ENCODE measurements at regions of chr16 and their contacts with region 1.

Region 1: GRCh38 chr16:66717112-66717675 is 20.7 kb upstream of the CMTM4 start:
- DNase-seq: peak in 2 of 3 donors; percentile 31 to 32
- H3K4me3 ChIP-seq: no peak overlapping the region
- H3K4me3 Mint-ChIP-seq: no peak overlapping the region
- H3K27ac ChIP-seq: no peak overlapping the region
- H3K27ac Mint-ChIP-seq: peak overlapping the region in 1 of 7 donors; percentile 42
- H3K4me1 ChIP-seq: no peaks in the 10 kb centered on the region
- H3K4me1 Mint-ChIP-seq: peaks cover 4% of the 10 kb centered on the region
- H3K27me3 ChIP-seq: no peaks in the 10 kb centered on the region
- H3K27me3 Mint-ChIP-seq: peaks cover 0 to 5% (median 0%) of the 10 kb centered on the region in 3 donors
- CTCF ChIP-seq: peak; percentile 72

Region 2: DNA sequence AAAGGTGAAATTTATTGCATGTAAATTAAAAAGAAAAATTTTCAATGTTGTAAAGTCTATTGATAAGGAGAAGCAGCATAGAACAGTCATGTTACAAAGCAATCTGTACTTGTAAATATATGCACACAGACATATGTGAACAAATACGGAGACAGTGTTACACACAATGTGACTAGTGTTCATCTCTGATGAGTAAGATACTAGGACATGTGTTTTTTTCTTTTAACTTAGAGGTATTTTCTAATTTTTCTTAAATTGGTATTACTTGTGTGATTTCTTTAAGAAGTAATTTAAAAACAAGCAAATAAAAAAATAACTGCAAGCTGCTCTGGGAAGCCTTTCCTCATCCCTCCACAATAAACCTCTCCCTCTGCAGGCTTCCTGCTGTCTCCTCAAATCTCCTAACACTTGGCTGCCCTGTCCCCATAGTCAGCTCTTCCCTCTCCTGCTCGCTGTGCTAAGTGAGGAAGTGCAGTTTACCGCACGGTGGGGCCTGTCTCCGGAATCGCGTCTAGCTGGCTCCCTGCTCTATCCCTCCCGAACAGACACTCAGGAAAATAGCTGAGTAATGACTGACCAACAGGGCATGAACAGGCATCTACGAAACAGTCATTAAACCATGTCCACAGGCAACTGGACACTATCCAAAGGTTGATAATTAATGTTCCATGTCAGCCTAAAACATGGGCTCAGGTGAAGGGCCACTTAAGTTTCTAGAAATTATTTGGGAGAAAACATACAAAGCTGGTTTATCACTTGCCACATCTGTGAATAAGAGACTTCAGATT is 56.6 kb before region 1 on chr16:
- intact Hi-C with region 1: loop called in 1 of 2 experiments (anchors 10 kb)
- DNase-seq: peak; percentile 44 to 62 (median 59)
- H3K4me3 ChIP-seq: peak overlapping the region in 1 of 3 experiments; percentile 24
- H3K4me3 Mint-ChIP-seq: peak overlapping the region in 1 of 2 donors; percentile 37
- H3K27ac ChIP-seq: peak overlapping the region; percentile 11 to 66
- H3K27ac Mint-ChIP-seq: peak overlapping the region; percentile 35 to 87 (median 80)
- H3K4me1 ChIP-seq: peaks cover 38 to 44% of the 10 kb centered on the region in 2 donors
- H3K4me1 Mint-ChIP-seq: peaks cover 48% of the 10 kb centered on the region
- H3K27me3 ChIP-seq: no peaks in the 10 kb centered on the region
- H3K27me3 Mint-ChIP-seq: no peaks in the 10 kb centered on the region
- CTCF ChIP-seq: peak; percentile 22

Region 3: DNA sequence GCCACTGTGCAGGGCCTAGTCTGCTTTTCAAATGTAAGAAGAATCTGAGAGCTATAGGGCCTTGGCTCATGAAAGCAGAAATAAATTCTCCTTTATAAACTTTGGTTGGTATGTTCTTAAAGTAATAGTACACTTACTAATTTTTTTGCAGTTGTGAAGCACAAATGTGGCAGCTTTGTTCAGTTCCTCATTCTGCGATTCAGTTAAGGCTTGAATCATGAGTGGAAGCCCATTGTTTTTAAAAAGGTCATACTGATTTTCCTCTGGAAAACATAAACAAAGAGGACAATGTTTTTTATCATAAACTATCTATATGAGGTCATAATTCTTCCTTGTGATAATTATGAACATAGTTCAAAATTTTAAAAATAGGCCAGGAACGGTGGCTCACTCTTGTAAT is 57.8 kb after region 1 on chr16:
- intact Hi-C with region 1: no loop called
- DNase-seq: no peak
- H3K4me3 ChIP-seq: no peak overlapping the region
- H3K4me3 Mint-ChIP-seq: no peak overlapping the region
- H3K27ac ChIP-seq: no peak overlapping the region
- H3K27ac Mint-ChIP-seq: no peak overlapping the region
- H3K4me1 ChIP-seq: no peaks in the 10 kb centered on the region
- H3K4me1 Mint-ChIP-seq: no peaks in the 10 kb centered on the region
- H3K27me3 ChIP-seq: no peaks in the 10 kb centered on the region
- H3K27me3 Mint-ChIP-seq: no peaks in the 10 kb centered on the region
- CTCF ChIP-seq: no peak

Region 4: DNA sequence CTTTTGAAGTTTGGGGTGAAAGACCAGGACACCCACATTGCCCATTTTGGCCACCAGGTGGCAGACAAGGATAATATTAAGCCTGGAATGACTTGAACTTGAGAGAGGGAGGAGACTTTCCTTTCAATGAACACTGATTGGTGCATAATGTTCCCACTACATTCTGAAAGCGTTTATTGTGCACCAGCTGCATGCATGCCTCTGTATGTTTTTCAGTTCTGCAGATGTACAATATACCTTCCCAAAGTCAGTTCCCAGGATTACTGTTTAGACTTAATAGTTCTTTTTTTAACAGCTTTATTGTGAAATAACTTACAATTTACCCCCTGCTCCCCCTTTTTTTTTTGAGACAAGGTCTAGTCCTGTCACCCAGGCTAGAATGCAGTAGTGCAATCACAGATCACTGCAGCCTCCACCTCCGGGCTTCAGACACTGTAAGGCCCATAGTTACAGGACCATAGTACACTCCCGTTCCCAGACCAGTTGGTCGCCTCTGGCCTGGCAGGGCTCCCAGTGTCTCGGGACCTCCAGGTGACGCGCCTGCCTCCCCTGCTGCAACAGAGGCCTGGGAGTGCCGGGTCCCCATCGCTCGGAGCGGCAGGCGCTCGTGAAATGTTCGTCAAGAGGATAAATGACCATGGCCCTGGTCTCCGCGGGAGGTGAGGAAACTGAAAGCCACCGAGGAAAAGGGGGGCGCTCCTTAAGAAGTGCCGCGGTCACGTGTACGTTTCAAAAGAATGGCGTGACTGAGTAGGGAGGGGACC is 230.3 kb after region 1 on chr16:
- intact Hi-C with region 1: no loop called
- DNase-seq: peak; percentile 74 to 85 (median 76)
- H3K4me3 ChIP-seq: peak overlapping the region; percentile 38 to 77 (median 38)
- H3K4me3 Mint-ChIP-seq: peak overlapping the region; percentile 86 to 98
- H3K27ac ChIP-seq: no peak overlapping the region
- H3K27ac Mint-ChIP-seq: peak overlapping the region in 2 of 7 donors; percentile 37 to 73
- H3K4me1 ChIP-seq: peaks cover 17 to 18% of the 10 kb centered on the region in 2 donors
- H3K4me1 Mint-ChIP-seq: peaks cover 22% of the 10 kb centered on the region
- H3K27me3 ChIP-seq: peaks cover 27 to 46% of the 10 kb centered on the region in 2 donors
- H3K27me3 Mint-ChIP-seq: peaks cover 47 to 52% (median 48%) of the 10 kb centered on the region in 3 donors
- CTCF ChIP-seq: peak; percentile 90

Measured in CD14-positive monocyte (primary cell).